Activated naive CD4-positive, alpha-beta T cell treated with anti-CD3 and anti-CD28 coated beads for 36 hours (primary cell): ENCODE measurements at regions of chr4 and their contacts with region 1.

Region 1: DNA sequence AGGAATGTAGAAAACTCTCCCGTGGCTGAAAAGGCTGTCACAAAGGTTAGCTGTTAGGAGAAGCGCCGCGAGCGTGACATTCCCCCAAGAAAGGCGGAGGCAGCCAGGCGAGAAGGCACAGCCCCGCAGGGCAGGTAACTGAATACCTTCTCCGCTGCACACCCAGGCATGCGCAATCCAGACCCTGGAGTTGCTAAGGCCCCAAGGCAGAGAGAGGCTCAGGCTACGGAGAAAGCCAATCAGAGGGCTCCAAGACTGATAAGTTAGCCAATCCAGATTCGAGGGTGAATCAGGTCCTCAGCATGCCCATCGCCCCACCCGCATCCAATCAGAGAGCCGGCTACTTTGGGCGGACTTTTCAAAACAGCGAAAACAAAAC is 485 bp upstream of the CCNG2 start:
- DNase-seq: peak; percentile 97
- H3K4me3 Mint-ChIP-seq: peak overlapping the region; percentile 98
- H3K27ac Mint-ChIP-seq: peak overlapping the region; percentile 97
- H3K4me1 Mint-ChIP-seq: peaks cover 21% of the 10 kb centered on the region
- H3K27me3 Mint-ChIP-seq: no peaks in the 10 kb centered on the region

Region 2: DNA sequence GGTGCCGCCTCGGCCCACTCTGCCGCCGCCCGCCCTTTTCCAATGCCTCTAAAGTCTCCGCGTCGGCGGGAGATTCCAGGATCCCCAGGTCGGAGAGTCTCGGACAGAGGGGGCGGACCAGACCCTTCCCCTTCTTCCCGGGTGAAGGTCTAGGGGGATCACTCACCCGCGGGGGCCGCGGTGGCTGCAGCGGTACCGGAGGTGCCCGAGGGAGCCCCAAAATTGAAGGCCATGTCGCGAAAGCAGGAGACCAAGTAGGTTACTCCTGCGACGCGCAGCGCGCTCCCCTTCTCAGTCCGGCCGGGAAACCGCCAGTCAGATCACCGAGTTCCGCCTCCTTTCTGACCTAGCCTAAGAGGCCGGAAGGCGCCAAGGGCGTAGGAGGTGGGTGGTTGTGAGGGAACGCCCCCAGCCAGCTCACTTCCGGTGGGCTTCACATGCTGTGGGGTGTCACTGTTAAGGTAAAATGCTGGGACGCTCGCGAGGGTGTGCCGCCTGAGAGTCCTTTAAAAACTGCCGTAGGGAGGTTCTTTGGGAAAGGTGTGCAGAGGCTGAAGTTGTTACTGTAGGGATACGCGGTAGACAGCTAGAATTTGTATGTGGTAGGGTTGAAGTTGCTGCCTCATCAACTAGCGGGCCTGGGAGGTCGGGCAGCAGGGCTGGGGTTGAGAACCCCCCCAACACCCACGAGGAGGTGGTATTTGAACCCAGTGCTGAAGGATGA is 1008.2 kb before region 1 on chr4 and contains the start of gene NUP54:
- CTCF ChIA-PET with region 1: no interaction called
- intact Hi-C with region 1: loop called (anchors 5 kb)
- DNase-seq: peak; percentile 97
- H3K4me3 Mint-ChIP-seq: peak within 1 kb of the TSS; percentile 100
- H3K27ac Mint-ChIP-seq: peak within 1 kb of the TSS; percentile 97
- H3K4me1 Mint-ChIP-seq: peaks cover 27% of the 10 kb centered on the region
- H3K27me3 Mint-ChIP-seq: no peaks in the 10 kb centered on the region
- total RNA-seq, gene NUP54: 43.9 to 53.4 TPM

Region 3: DNA sequence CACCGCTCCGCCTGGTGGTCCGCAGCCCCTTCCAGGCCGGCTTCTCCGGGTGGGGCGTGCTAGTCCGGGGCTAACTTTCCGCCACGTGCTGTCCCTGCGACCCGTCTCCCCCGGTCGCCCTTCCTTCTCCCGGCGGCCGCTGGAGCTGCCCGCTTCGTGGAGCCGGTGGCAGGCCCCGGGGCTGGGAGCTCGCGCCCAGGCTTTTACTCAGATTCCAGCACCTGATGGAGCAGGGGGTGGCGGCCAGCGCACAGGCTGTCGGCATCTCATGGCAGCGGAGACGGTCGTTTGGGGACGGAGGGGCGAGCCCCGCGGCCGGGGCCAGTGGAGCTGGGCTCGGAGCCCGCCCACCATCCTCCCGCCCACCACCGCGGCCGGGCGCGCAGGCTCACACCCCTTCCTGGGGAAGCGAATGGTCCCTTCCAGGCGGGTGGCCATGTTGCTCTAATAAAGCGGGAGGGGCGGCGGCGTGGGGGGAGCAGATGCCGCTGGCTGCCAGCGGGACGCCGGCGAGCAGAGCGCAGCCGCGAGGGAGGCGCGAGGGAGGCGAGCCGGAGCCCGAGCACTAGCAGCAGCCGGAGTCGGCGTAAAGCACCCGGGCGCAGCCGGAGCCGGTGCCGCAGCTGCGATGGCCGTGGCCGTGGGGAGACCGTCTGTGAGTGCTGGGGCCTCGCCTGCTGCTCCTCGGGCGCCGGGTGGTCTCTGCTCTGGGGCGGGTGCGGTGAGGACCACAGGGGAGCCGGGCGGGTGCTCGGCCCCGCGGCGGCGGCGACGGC is 207.1 kb before region 1 on chr4 and contains the start of gene SEPTIN11:
- CTCF ChIA-PET with region 1: no interaction called
- intact Hi-C with region 1: loop called (anchors 2 kb)
- DNase-seq: peak; percentile 81
- H3K4me3 Mint-ChIP-seq: peak within 1 kb of the TSS; percentile 81
- H3K27ac Mint-ChIP-seq: peak within 1 kb of the TSS; percentile 59
- H3K4me1 Mint-ChIP-seq: peaks cover 13% of the 10 kb centered on the region
- H3K27me3 Mint-ChIP-seq: peaks cover 31% of the 10 kb centered on the region
- total RNA-seq, gene SEPTIN11: 24.0 TPM

Region 4: GRCh38 chr4:77052352-77052751 is 104.2 kb before region 1 on chr4:
- CTCF ChIA-PET with region 1: no interaction called
- intact Hi-C with region 1: loop called (anchors 1 kb)
- DNase-seq: peak; percentile 81
- H3K4me3 Mint-ChIP-seq: no peak overlapping the region
- H3K27ac Mint-ChIP-seq: peak overlapping the region; percentile 50
- H3K4me1 Mint-ChIP-seq: no peaks in the 10 kb centered on the region
- H3K27me3 Mint-ChIP-seq: no peaks in the 10 kb centered on the region

Region 5: GRCh38 chr4:77095101-77095821 is 61.3 kb before region 1 on chr4:
- CTCF ChIA-PET with region 1: interaction called, 25 read pairs
- intact Hi-C with region 1: loop called (anchors 1 kb)
- DNase-seq: peak; percentile 87
- H3K4me3 Mint-ChIP-seq: no peak overlapping the region
- H3K27ac Mint-ChIP-seq: no peak overlapping the region
- H3K4me1 Mint-ChIP-seq: peaks cover 6% of the 10 kb centered on the region
- H3K27me3 Mint-ChIP-seq: no peaks in the 10 kb centered on the region

Region 6: DNA sequence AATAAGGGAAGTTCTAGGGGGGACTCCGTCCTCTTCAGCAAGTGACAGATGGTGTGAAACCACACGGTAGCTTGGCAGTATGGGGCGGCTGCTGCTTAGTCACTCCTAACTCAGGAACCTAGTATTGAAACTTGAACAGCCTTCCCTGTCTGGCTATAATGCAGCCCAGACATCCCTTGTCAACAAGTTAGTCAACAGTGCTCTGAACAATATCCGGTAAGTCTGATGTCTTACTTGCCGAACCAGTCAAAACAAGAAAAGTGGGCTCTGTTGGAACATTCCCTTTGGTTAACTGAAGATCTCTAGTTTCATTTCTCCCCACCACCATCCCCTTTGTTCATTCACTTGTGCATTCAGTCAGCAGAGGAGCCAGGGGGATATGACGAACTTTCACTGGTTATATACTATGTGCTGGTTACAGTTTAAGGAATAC is 430.4 kb after region 1 on chr4:
- CTCF ChIA-PET with region 1: no interaction called
- intact Hi-C with region 1: loop called (anchors 2 kb)
- DNase-seq: peak; percentile 87
- H3K4me3 Mint-ChIP-seq: peak overlapping the region; percentile 17
- H3K27ac Mint-ChIP-seq: peak overlapping the region; percentile 80
- H3K4me1 Mint-ChIP-seq: peaks cover 49% of the 10 kb centered on the region
- H3K27me3 Mint-ChIP-seq: peaks cover 15% of the 10 kb centered on the region